Activated CD4-positive, alpha-beta memory T cell treated with anti-CD3 and anti-CD28 coated beads for 36 hours (primary cell): ENCODE measurements at regions of chr2 and their contacts with region 1.

Region 1: DNA sequence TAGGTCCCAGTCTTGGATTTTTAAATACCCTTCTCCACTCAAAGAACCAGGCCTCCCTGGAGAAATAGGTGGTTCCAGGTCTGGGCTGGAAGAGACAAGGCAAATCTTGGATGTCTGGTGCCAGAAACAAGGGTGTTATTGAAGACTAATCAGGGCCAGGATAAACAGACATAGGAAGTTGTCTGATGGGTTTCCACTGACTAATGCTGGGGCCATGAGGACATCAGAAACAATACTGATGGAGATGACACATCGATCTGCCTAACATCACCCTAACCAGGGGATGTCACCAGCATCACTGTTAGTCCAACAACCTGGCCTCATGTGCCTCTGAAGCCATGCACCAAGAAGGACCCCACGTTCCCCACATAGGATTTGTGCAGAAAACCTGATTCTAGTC is 42.5 kb upstream of the GLI2 start:
- DNase-seq: no peak
- H3K4me3 Mint-ChIP-seq: no peak overlapping the region
- H3K27ac Mint-ChIP-seq: no peak overlapping the region
- H3K4me1 Mint-ChIP-seq: peaks cover 5% of the 10 kb centered on the region
- H3K27me3 Mint-ChIP-seq: peaks cover 41% of the 10 kb centered on the region

Region 2: GRCh38 chr2:120949027-120949956 is 256.2 kb after region 1 on chr2:
- CTCF ChIA-PET with region 1: interaction called, 3 read pairs
- POLR2A ChIA-PET with region 1: no interaction called
- intact Hi-C with region 1: loop called (anchors 1 kb)
- DNase-seq: no peak
- H3K4me3 Mint-ChIP-seq: no peak overlapping the region
- H3K27ac Mint-ChIP-seq: no peak overlapping the region
- H3K4me1 Mint-ChIP-seq: no peaks in the 10 kb centered on the region
- H3K27me3 Mint-ChIP-seq: no peaks in the 10 kb centered on the region

Region 3: GRCh38 chr2:121071034-121071504 is 377.9 kb after region 1 on chr2:
- CTCF ChIA-PET with region 1: interaction called, 8 read pairs
- POLR2A ChIA-PET with region 1: no interaction called
- intact Hi-C with region 1: loop called (anchors 2 kb)
- DNase-seq: peak; percentile 64
- H3K4me3 Mint-ChIP-seq: no peak overlapping the region
- H3K27ac Mint-ChIP-seq: no peak overlapping the region
- H3K4me1 Mint-ChIP-seq: peaks cover 2% of the 10 kb centered on the region
- H3K27me3 Mint-ChIP-seq: peaks cover 7% of the 10 kb centered on the region

Region 4: GRCh38 chr2:121076885-121077549 is 383.9 kb after region 1 on chr2:
- CTCF ChIA-PET with region 1: interaction called, 9 read pairs
- POLR2A ChIA-PET with region 1: no interaction called
- intact Hi-C with region 1: loop called (anchors 1 kb)
- DNase-seq: peak; percentile 80
- H3K4me3 Mint-ChIP-seq: no peak overlapping the region
- H3K27ac Mint-ChIP-seq: no peak overlapping the region
- H3K4me1 Mint-ChIP-seq: peaks cover 2% of the 10 kb centered on the region
- H3K27me3 Mint-ChIP-seq: peaks cover 16% of the 10 kb centered on the region